Left lung (tissue), 14 donors: ENCODE measurements at regions of chr22 and their contacts with region 1.

Region 1: DNA sequence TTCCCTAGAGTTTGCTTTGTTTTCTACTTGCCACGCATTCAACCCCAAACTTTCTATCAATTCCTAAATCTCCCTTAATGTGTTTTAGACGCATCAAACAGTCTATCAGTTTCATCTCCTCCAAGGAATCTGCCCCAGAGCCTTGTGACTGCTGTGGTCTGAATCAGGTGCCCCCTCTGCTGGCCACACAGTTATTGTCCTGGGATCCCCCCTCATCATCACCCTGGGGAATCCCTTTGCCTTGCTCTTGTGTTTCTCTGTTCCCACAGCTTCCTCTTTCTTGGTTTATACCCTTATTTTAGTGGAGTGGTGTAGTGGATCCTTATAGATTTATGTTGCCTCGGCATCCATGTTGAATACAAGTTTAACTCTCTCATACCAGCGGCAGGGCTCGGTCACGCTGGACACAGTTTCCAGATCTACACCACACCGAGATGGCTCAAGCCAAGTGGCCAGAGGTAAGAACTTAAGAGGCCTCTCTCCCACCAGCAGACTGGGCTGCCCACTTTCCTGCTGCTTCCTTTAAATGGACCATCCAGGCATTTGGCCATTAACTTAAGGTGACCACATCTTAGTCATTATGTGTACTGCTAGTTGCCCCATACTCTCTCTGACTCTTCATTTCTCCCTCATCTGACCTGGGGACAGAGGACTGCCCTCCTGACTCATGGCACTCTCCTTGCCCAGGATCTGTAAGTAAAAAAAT is 8.2 kb downstream of the UPB1 start:
- DNase-seq: peak in 2 of 4 donors; percentile 39 to 66
- ATAC-seq: peak; percentile 69
- H3K4me3 ChIP-seq: no peak overlapping the region
- H3K27ac ChIP-seq: peak overlapping the region in 1 of 2 donors; percentile 75
- H3K4me1 ChIP-seq: peaks cover 6 to 65% of the 10 kb centered on the region in 2 donors
- H3K27me3 ChIP-seq: no peaks in the 10 kb centered on the region
- CTCF ChIP-seq: peak; percentile 59 to 63

Region 2: GRCh38 chr22:24325105-24325757 is 178.1 kb before region 1 on chr22:
- intact Hi-C with region 1: loop called in 1 of 2 experiments (anchors 10 kb)
- DNase-seq: peak in 2 of 4 donors; percentile 52 to 76
- ATAC-seq: peak; percentile 98
- H3K4me3 ChIP-seq: no peak overlapping the region
- H3K27ac ChIP-seq: peak overlapping the region in 1 of 2 donors; percentile 15
- H3K4me1 ChIP-seq: peaks cover 3 to 7% of the 10 kb centered on the region in 2 donors
- H3K27me3 ChIP-seq: no peaks in the 10 kb centered on the region
- CTCF ChIP-seq: peak; percentile 62 to 67

Region 3: DNA sequence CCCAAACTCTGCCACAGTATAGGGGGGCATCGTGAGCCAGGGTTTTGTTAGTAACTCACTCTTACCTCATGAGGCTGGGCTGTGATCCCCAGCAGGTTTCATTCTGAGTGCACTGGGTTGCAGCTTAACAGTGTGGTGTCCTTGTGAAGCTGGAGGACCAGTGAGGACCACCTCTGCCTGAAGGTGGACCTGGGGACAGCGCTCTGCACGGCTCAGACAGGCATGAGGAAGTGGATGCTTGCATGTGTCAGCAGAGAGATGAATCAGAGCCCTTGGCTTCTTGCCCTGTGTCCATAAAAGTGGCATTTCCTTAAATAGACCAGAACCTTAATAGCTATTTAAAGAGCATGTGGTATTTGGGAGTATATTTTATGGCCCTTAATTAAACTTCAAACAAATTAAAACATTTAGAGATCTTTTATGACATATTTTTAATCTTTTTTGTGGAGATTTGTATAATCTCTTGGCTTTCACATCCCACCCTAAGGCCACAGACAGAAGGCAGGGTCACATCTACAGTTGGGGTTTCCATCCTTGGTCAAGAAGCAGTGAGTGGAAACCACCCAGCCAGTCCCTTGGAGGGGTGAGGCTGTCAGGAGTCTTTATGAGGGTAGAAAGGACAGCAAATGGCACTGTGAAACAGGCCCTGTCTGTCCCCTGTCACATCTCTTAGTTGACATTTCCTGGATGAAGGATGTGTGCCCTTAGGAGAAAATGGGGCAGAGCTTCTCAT is 100.7 kb before region 1 on chr22:
- intact Hi-C with region 1: no loop called
- DNase-seq: peak in 3 of 4 donors; percentile 51 to 81 (median 76)
- ATAC-seq: peak; percentile 86
- H3K4me3 ChIP-seq: peak overlapping the region in 1 of 2 donors; percentile 6
- H3K27ac ChIP-seq: peak overlapping the region; percentile 70 to 74
- H3K4me1 ChIP-seq: peaks cover 32 to 76% of the 10 kb centered on the region in 2 donors
- H3K27me3 ChIP-seq: no peaks in the 10 kb centered on the region
- CTCF ChIP-seq: no peak

Region 4: GRCh38 chr22:24423519-24424000 is 79.7 kb before region 1 on chr22:
- intact Hi-C with region 1: loop called in 1 of 2 experiments (anchors 10 kb)
- DNase-seq: peak in 3 of 4 donors; percentile 56 to 96 (median 67)
- ATAC-seq: peak; percentile 80
- H3K4me3 ChIP-seq: peak overlapping the region; percentile 47 to 63
- H3K27ac ChIP-seq: peak overlapping the region in 1 of 2 donors; percentile 79
- H3K4me1 ChIP-seq: peaks cover 15 to 86% of the 10 kb centered on the region in 2 donors
- H3K27me3 ChIP-seq: peaks cover 0 to 8% of the 10 kb centered on the region in 2 donors
- CTCF ChIP-seq: peak; percentile 92 to 97